Posterior cingulate gyrus (tissue), 11 donors: ENCODE measurements at regions of chr9 and their contacts with region 1.

Region 1: GRCh38 chr9:21317956-21318923 is 13.1 kb upstream of the IFNA5 start:
- DNase-seq: peak in 6 of 10 donors; percentile 27 to 71 (median 44)

Region 2: DNA sequence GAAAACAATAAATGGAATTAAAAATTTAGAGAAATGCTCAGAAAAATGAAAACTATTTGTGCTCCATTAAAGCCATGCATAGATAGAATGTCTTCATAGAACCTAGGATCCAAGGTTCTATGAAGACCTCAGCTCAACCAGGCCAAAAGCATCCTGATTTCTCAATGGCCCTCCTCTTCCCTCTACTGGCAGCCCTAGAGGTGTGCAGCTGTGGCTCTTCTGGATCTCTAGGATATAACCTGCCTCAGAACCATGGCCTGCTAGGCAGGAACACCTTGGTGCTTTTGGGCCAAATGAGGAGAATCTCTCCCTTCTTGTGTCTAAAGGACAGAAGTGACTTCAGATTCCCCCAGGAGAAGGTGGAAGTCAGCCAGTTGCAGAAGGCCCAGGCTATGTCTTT is 137.1 kb after region 1 on chr9:
- intact Hi-C with region 1: loop called (anchors 5 kb)
- DNase-seq: no peak

Region 3: DNA sequence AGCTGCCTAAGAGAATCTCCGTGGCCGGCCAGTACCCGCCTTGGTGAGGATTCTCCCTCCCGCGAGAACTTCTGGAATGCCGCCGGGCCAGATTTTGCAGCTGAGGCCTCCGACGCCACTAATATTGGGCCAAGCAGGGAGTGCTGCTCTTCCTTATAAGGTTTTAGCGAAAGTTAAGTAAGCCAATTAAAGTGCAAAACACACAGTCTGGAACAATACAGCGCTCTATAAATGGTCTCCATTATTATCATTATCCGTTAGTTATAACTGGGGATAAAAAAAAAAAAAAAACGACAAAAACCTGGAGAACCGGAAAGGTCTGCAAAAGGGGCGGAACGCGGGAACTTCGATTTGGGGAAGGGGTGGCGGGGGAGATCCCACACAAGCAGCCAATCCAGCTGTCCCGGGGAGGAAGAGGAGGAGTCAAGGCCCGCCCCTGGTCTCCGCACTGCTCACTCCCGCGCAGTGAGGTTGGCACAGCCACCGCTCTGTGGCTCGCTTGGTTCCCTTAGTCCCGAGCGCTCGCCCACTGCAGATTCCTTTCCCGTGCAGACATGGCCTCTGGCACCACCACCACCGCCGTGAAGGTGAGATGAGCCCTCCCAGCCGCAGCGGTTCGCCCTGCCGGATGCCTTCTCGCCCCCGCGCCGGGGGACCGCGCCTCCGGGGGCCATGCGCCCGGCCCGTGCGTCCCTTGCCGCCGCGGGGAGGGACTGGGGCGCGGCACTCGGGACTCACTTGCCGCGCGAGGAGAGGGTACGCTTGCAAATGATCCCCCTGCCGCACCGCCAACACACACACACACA is 484.2 kb after region 1 on chr9 and contains the start of gene MTAP:
- intact Hi-C with region 1: loop called (anchors 5 kb)
- DNase-seq: peak; percentile 84 to 99 (median 93)